MCF 10A (cell line): ENCODE measurements at regions of chr3 and their contacts with region 1.

Region 1: DNA sequence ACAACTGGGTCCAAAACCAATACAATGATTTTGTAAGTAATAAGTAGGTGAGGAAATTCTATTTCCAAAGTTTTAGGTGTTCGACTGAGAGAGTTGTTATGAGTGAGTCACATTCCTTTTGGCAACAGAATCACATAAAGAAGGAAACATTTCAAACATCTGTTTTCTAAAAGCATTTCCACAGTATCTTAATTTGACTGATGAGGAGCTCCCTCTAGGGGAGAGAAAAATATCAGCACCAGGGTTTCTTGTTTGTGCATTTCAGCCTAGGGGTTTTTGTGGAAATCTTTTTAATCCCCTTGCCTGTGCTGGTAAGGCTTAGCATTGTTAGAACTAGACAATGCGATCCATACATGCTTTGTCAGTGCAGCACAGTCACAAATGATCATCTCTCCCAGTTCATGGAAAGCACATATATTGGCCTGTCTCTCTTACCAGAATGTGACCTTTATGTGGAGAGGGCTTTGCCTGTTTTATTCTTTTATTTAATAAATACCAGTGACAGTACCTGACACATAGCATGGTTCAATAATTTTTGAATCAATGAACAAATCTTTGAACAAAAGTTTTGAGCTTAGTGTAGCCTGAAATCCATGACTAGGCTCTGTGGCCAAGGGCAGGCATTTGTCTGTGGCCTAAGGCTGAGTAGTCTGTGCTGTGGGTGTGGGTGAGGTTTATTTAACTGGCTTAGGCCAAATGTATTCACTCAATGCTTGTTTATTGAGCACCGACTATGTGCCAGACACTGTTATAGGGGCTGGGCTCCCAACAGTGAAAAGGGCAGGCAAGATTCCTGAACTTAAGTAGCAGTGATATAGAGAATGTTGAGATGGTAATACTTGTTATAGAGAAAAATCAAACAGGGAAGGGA is 21.1 kb upstream of the IQCF6 start:
- DNase-seq: peak; percentile 77
- H3K4me3 Mint-ChIP-seq: no peak overlapping the region
- H3K27ac Mint-ChIP-seq: no peak overlapping the region
- H3K4me1 Mint-ChIP-seq: peaks cover 13% of the 10 kb centered on the region
- H3K27me3 Mint-ChIP-seq: no peaks in the 10 kb centered on the region
- CTCF ChIP-seq: peak; percentile 80

Region 2: GRCh38 chr3:51637941-51638471 is 162.1 kb before region 1 on chr3:
- CTCF ChIA-PET with region 1: interaction called, 7 read pairs
- POLR2A ChIA-PET with region 1: no interaction called
- intact Hi-C with region 1: loop called (anchors 5 kb)
- DNase-seq: peak; percentile 72
- H3K4me3 Mint-ChIP-seq: no peak overlapping the region
- H3K27ac Mint-ChIP-seq: no peak overlapping the region
- H3K4me1 Mint-ChIP-seq: no peaks in the 10 kb centered on the region
- H3K27me3 Mint-ChIP-seq: no peaks in the 10 kb centered on the region
- CTCF ChIP-seq: peak; percentile 84

Region 3: GRCh38 chr3:51718547-51719409 is 81.3 kb before region 1 on chr3:
- CTCF ChIA-PET with region 1: interaction called, 16 read pairs
- POLR2A ChIA-PET with region 1: no interaction called
- intact Hi-C with region 1: loop called (anchors 1 kb)
- DNase-seq: peak; percentile 72
- H3K4me3 Mint-ChIP-seq: no peak overlapping the region
- H3K27ac Mint-ChIP-seq: no peak overlapping the region
- H3K4me1 Mint-ChIP-seq: no peaks in the 10 kb centered on the region
- H3K27me3 Mint-ChIP-seq: no peaks in the 10 kb centered on the region
- CTCF ChIP-seq: peak; percentile 82

Region 4: GRCh38 chr3:52278510-52279069 is 478.5 kb after region 1 on chr3 and contains the start of gene WDR82:
- CTCF ChIA-PET with region 1: no interaction called
- POLR2A ChIA-PET with region 1: no interaction called
- intact Hi-C with region 1: no loop called
- DNase-seq: peak; percentile 90
- H3K4me3 Mint-ChIP-seq: peak within 1 kb of the TSS; percentile 84
- H3K27ac Mint-ChIP-seq: peak within 1 kb of the TSS; percentile 99
- H3K4me1 Mint-ChIP-seq: peaks cover 26% of the 10 kb centered on the region
- H3K27me3 Mint-ChIP-seq: no peaks in the 10 kb centered on the region
- CTCF ChIP-seq: peak; percentile 38
- total RNA-seq, gene WDR82: 60.7 and 62.5 TPM in 2 replicates